ENCODE measurements at regions of chr15 and their contacts with region 1.

Region 1: GRCh38 chr15:42800731-42801474 is 64.0 kb upstream of the CDAN1 start:
- DNase-seq: no peak
- H3K4me3 ChIP-seq: no peak overlapping the region
- H3K27ac ChIP-seq: no peak overlapping the region
- H3K4me1 ChIP-seq: no peaks in the 10 kb centered on the region
- H3K27me3 ChIP-seq: no peaks in the 10 kb centered on the region
- CTCF ChIP-seq: peak in 1 of 3 experiments; percentile 21

Region 2: DNA sequence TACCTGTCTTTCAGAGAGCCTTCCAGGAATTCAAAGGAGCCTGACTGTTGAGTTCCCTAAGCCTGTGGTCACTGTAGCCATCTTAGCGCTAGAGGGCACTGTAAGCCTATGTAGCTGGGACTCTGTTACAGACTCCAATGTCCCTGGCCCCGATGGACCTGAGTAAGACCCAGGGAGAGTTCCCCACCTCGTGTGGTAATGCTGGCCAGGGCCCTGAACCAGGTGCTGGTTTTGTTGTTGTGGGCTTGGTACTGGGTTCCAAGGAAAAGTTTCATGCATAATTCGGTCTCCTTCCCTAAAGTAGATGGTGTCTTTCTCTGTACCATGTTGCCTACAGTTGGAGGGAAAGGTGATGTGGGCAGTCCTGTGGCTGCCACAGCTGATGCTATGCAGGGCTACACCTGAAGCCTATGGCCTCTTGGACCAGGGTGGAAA is 96.4 kb before region 1 on chr15:
- intact Hi-C with region 1: loop called (anchors 5 kb)
- DNase-seq: peak in 1 of 2 donors; percentile 84
- H3K4me3 ChIP-seq: no peak overlapping the region
- H3K27ac ChIP-seq: peak overlapping the region in 1 of 2 donors; percentile 33
- H3K4me1 ChIP-seq: peaks cover 0 to 7% of the 10 kb centered on the region in 2 donors
- H3K27me3 ChIP-seq: no peaks in the 10 kb centered on the region
- CTCF ChIP-seq: peak; percentile 78 to 89 (median 82)

Region 3: GRCh38 chr15:42929306-42929848 is 128.5 kb after region 1 on chr15:
- intact Hi-C with region 1: loop called (anchors 5 kb)
- DNase-seq: no peak
- H3K4me3 ChIP-seq: no peak overlapping the region
- H3K27ac ChIP-seq: peak overlapping the region; percentile 55 to 65
- H3K4me1 ChIP-seq: peaks cover 0 to 14% of the 10 kb centered on the region in 2 donors
- H3K27me3 ChIP-seq: no peaks in the 10 kb centered on the region
- CTCF ChIP-seq: no peak

Measured in ascending aorta (tissue), 2 donors.